B cell (primary cell): ENCODE measurements at regions of chrX and their contacts with region 1.

Region 1: GRCh38 chrX:55160685-55161552 is 59.2 kb upstream of the PAGE5 start:
- DNase-seq: peak; percentile 92
- ATAC-seq: peak; percentile 90
- H3K4me3 ChIP-seq: peak overlapping the region; percentile 66 to 72 (median 70)
- H3K4me3 Mint-ChIP-seq: peak overlapping the region; percentile 92
- H3K27ac ChIP-seq: peak overlapping the region; percentile 91 to 93
- H3K27ac Mint-ChIP-seq: peak overlapping the region; percentile 98
- H3K4me1 ChIP-seq: peaks cover 2 to 5% of the 10 kb centered on the region in 2 donors
- H3K4me1 Mint-ChIP-seq: peaks cover 9% of the 10 kb centered on the region
- H3K27me3 ChIP-seq: no peaks in the 10 kb centered on the region
- H3K27me3 Mint-ChIP-seq: no peaks in the 10 kb centered on the region
- CTCF ChIP-seq: peak; percentile 69

Region 2: GRCh38 chrX:53683556-53684414 is 1477.1 kb before region 1 on chrX:
- CTCF ChIA-PET with region 1: no interaction called
- POLR2A ChIA-PET with region 1: no interaction called
- intact Hi-C with region 1: loop called (anchors 5 kb)
- DNase-seq: peak; percentile 96
- ATAC-seq: peak; percentile 70
- H3K4me3 ChIP-seq: peak overlapping the region; percentile 65 to 77 (median 69)
- H3K4me3 Mint-ChIP-seq: peak overlapping the region; percentile 94
- H3K27ac ChIP-seq: peak overlapping the region; percentile 95 to 98
- H3K27ac Mint-ChIP-seq: peak overlapping the region; percentile 99
- H3K4me1 ChIP-seq: peaks cover 21 to 26% of the 10 kb centered on the region in 2 donors
- H3K4me1 Mint-ChIP-seq: peaks cover 39% of the 10 kb centered on the region
- H3K27me3 ChIP-seq: no peaks in the 10 kb centered on the region
- H3K27me3 Mint-ChIP-seq: no peaks in the 10 kb centered on the region
- CTCF ChIP-seq: no peak

Region 3: DNA sequence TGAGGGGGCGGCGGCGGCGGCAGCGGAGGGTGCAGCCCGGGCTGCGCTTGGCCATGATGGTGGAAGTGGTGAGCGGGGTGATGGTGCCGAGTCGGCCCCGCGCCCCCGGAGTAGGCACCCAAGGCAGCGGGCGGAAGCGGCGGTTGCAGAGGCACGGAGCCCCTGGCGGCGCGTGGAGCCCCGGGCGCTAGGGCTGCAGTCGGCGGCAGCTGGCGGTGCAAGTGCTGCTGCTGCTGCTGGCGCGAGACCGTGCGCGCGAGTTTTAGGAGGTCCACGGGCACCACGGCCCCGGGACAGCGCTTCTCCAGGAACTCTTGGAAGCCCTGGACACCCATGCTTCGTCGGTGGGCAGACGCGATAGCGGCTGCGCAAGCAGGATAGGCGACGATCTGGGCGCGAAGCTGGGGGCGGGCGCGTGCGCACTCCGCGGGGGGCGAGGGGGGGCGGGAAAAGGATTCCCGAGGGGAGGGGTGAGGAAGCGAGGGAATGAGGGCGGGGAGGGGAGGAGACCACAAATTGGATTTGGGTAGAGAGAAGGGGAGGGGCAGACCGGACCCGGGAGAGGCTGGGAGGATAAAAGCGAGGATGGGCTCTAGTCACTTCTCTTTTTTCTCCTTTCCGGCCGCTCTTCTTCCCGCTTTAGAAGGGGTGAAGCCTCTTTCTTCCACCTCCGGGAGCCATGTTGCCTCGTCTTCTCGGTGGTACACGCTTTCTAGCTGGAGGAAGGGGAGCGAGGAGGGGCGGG is 977.9 kb before region 1 on chrX and contains the start of gene FAM120C:
- CTCF ChIA-PET with region 1: no interaction called
- POLR2A ChIA-PET with region 1: no interaction called
- intact Hi-C with region 1: loop called (anchors 1 kb)
- DNase-seq: peak; percentile 78
- ATAC-seq: peak; percentile 76
- H3K4me3 ChIP-seq: peak within 1 kb of the TSS in 4 of 5 experiments; percentile 61 to 74 (median 66)
- H3K4me3 Mint-ChIP-seq: peak within 1 kb of the TSS; percentile 89
- H3K27ac ChIP-seq: peak within 1 kb of the TSS; percentile 48 to 63
- H3K27ac Mint-ChIP-seq: peak within 1 kb of the TSS; percentile 88
- H3K4me1 ChIP-seq: peaks cover 20 to 24% of the 10 kb centered on the region in 2 donors
- H3K4me1 Mint-ChIP-seq: peaks cover 42% of the 10 kb centered on the region
- H3K27me3 ChIP-seq: no peaks in the 10 kb centered on the region
- H3K27me3 Mint-ChIP-seq: no peaks in the 10 kb centered on the region
- CTCF ChIP-seq: no peak
- total RNA-seq, gene FAM120C: 22.2 and 23.3 TPM in 2 replicates

Region 4: DNA sequence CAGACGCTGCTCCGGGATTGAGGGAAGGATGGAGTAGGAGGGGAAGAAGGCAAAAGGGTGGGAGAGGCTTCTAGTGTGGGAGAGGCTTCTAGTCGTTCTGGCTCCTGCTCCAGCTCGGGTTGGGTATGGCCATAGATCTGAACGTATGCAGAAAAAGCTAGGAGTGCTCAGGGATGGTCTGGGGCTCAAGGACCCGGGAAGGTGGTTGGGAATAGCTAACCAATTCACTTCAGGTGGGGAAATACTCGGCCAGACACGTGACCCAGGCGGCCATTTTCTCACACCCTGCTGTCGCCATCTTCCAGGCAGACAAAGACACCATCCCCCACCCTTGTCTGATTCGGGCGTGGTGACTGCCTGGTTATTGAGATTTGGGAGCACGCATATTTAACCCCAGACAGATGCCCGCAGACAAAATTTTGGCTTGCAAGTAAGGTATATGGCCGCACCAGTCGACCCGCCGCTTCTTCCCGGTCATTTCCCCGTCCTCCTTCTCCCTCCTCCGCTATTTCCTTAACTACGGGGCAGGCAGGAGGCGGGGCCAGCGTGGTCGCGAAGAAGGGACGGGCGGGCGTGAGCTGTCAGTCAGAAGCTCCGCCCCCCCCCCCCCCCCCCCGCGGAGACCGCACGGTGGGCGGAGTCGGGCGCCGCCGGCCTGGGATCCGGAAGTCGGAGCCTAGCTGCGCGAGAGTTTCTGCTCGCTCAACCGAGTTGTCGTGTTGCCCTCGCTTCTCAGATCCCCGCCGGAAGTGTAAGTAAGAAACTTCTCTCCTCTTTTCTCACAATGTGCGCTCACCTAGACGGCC is 631.2 kb before region 1 on chrX and contains the start of gene GNL3L:
- CTCF ChIA-PET with region 1: no interaction called
- POLR2A ChIA-PET with region 1: no interaction called
- intact Hi-C with region 1: loop called (anchors 2 kb)
- DNase-seq: peak; percentile 89
- ATAC-seq: peak; percentile 86
- H3K4me3 ChIP-seq: peak within 1 kb of the TSS; percentile 64 to 93 (median 75)
- H3K4me3 Mint-ChIP-seq: peak within 1 kb of the TSS; percentile 93
- H3K27ac ChIP-seq: peak within 1 kb of the TSS; percentile 89 to 91
- H3K27ac Mint-ChIP-seq: peak within 1 kb of the TSS; percentile 97
- H3K4me1 ChIP-seq: peaks cover 13 to 31% of the 10 kb centered on the region in 2 donors
- H3K4me1 Mint-ChIP-seq: peaks cover 34% of the 10 kb centered on the region
- H3K27me3 ChIP-seq: no peaks in the 10 kb centered on the region
- H3K27me3 Mint-ChIP-seq: no peaks in the 10 kb centered on the region
- CTCF ChIP-seq: no peak
- total RNA-seq, gene GNL3L: 47.2 and 52.4 TPM in 2 replicates

Region 5: DNA sequence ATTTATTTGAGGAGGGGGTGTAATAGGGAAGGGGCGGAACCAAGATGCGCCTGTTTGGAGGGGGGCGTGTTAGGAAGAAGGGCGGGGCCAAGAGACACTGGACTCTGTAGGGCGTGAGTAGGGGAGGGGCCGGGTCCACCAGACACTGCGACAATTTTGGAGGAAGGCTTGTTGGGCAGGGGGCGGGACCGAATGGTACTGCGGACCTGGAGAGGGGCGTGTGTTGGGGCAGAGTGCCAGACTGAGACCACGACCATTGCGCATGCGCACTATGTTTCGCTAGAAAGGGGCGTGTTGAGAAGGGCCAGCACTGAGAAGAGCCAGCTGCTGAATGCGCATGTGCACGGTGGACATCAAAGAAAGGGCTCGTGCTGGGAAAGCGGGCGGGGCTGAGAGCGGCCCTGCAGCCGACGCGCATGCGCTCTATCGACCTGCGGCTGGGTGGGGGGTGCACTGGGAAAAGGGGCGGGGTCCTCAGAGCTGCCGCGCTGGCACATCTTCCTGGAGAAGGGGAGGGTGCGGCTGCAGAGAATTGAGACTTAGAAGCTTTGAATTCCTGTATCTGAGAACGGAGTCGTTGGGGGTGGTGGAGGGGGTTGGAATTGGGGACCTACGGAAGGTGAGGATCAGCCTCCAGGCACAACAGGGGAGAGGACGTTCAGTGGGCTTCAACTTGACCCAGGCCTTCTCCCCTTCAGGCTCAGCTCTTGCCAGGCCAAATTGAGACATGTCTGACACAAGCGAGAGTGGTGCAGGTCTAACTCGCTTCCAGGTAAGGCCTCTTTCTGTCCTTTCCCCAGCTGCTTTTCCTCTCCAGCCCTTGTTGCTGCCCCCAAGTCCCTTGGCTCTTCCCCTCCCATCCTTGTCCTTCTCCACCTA is 352.1 kb before region 1 on chrX:
- CTCF ChIA-PET with region 1: no interaction called
- POLR2A ChIA-PET with region 1: no interaction called
- intact Hi-C with region 1: loop called (anchors 1 kb)
- DNase-seq: peak; percentile 92
- ATAC-seq: peak; percentile 92
- H3K4me3 ChIP-seq: peak overlapping the region in 4 of 5 experiments; percentile 67 to 81 (median 76)
- H3K4me3 Mint-ChIP-seq: peak overlapping the region; percentile 96
- H3K27ac ChIP-seq: peak overlapping the region; percentile 64 to 82
- H3K27ac Mint-ChIP-seq: peak overlapping the region; percentile 93
- H3K4me1 ChIP-seq: peaks cover 8 to 16% of the 10 kb centered on the region in 2 donors
- H3K4me1 Mint-ChIP-seq: peaks cover 5% of the 10 kb centered on the region
- H3K27me3 ChIP-seq: no peaks in the 10 kb centered on the region
- H3K27me3 Mint-ChIP-seq: no peaks in the 10 kb centered on the region
- CTCF ChIP-seq: no peak

Region 6: DNA sequence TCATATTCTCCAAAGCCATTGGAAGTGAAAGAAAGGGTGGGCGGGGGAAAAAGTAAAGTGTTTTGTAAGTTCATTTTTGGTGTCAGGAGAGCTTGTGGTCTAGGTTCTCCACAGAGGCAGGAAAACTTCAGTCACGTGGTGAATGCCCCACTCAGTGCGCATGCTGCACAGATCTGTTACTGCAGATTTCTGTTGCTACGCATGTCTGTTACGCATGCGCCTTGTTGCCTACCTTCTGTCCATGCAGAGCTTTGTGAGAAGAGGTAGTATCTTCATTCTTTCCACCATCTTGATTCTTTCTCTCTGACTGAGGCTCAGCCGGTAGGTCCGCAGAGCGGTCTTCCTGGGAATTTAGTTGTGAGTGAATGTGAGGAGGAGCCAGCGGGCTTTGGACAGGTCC is 118.9 kb after region 1 on chrX:
- CTCF ChIA-PET with region 1: no interaction called
- POLR2A ChIA-PET with region 1: no interaction called
- intact Hi-C with region 1: no loop called
- DNase-seq: no peak
- ATAC-seq: no peak
- H3K4me3 ChIP-seq: no peak overlapping the region
- H3K4me3 Mint-ChIP-seq: no peak overlapping the region
- H3K27ac ChIP-seq: no peak overlapping the region
- H3K27ac Mint-ChIP-seq: no peak overlapping the region
- H3K4me1 ChIP-seq: no peaks in the 10 kb centered on the region
- H3K4me1 Mint-ChIP-seq: no peaks in the 10 kb centered on the region
- H3K27me3 ChIP-seq: no peaks in the 10 kb centered on the region
- H3K27me3 Mint-ChIP-seq: no peaks in the 10 kb centered on the region
- CTCF ChIP-seq: no peak

Region 7: GRCh38 chrX:55717521-55718497 is 556.9 kb after region 1 on chrX and contains the start of gene RRAGB:
- CTCF ChIA-PET with region 1: no interaction called
- POLR2A ChIA-PET with region 1: no interaction called
- intact Hi-C with region 1: loop called (anchors 1 kb)
- DNase-seq: peak; percentile 94
- ATAC-seq: peak; percentile 95
- H3K4me3 ChIP-seq: peak within 1 kb of the TSS; percentile 66 to 74 (median 70)
- H3K4me3 Mint-ChIP-seq: peak within 1 kb of the TSS; percentile 91
- H3K27ac ChIP-seq: peak within 1 kb of the TSS; percentile 90 to 94
- H3K27ac Mint-ChIP-seq: peak within 1 kb of the TSS; percentile 93
- H3K4me1 ChIP-seq: peaks cover 9 to 15% of the 10 kb centered on the region in 2 donors
- H3K4me1 Mint-ChIP-seq: peaks cover 29% of the 10 kb centered on the region
- H3K27me3 ChIP-seq: no peaks in the 10 kb centered on the region
- H3K27me3 Mint-ChIP-seq: no peaks in the 10 kb centered on the region
- CTCF ChIP-seq: peak; percentile 72
- total RNA-seq, gene RRAGB: 21.3 and 22.3 TPM in 2 replicates